ENCODE measurements at regions of chr13 and their contacts with region 1.

Region 1: DNA sequence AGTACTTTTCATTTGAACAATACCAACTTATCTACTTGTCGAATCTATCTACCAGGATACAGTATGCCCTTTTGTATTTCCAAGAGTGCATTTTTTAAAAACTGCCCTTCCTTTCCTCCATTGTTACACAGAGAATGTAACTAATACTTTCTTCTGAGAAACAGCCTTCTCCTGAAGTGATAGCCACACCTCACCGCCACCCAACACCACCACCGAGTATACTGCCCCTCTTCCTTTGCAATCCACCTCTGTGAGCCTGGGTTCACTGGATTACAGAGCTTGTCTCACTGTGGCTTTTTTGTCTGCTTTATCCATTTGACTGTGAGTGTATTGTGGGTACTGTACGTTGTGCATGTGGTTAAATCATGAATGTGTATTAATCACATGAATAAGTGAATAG is 305.4 kb downstream of the KLF12 start:
- DNase-seq: no peak
- ATAC-seq: no peak
- H3K4me3 ChIP-seq: no peak overlapping the region
- H3K27ac ChIP-seq: no peak overlapping the region
- H3K4me1 ChIP-seq: no peaks in the 10 kb centered on the region
- H3K27me3 ChIP-seq: no peaks in the 10 kb centered on the region
- CTCF ChIP-seq: no peak

Region 2: GRCh38 chr13:73754727-73755292 is 74.0 kb before region 1 on chr13:
- intact Hi-C with region 1: loop called in 1 of 2 experiments (anchors 5 kb)
- DNase-seq: no peak
- ATAC-seq: peak; percentile 49 to 88 (median 62)
- H3K4me3 ChIP-seq: no peak overlapping the region
- H3K27ac ChIP-seq: no peak overlapping the region
- H3K4me1 ChIP-seq: no peaks in the 10 kb centered on the region
- H3K27me3 ChIP-seq: no peaks in the 10 kb centered on the region
- CTCF ChIP-seq: peak; percentile 73